HEK293 (cell line): ENCODE measurements at regions of chr1 and their contacts with region 1.

Region 1: GRCh38 chr1:156065212-156065611 is 4.3 kb downstream of the RAB25 start:
- H3K4me3 ChIP-seq: no peak overlapping the region
- H3K27ac ChIP-seq: no peak overlapping the region
- H3K4me1 ChIP-seq: peaks cover 4% of the 10 kb centered on the region; the same call in 1 of the 2 replicates
- CTCF ChIP-seq: no peak

Region 2: DNA sequence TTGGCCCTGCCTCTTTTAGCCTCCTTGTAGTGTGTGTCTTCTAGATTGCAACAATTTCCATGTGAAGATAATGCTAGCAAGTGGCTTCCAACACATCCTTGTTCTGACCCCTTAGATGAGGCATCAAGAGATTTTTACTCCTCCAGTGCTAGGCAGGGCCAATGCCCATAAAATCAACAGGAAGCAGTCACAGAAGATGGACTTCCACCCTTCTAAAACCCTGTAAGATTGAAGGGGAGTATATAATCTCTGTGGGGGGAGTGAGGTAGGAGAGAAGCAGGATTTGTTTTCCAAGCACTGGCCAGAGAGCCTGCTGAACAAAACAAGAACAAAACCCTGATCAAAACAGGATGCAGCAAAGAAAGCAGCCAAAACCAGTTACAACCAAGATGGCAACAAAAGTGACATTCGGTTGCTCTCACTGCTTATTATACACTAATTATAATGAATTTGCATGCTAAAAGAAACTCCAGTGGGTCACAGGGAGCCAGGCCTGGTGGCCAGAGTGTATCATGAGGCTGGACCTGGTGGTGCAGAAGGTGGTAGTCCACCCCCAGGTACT is 220.3 kb before region 1 on chr1:
- CTCF ChIA-PET with region 1: no interaction called
- POLR2A ChIA-PET with region 1: no interaction called
- H3K4me3 ChIP-seq: no peak overlapping the region
- H3K27ac ChIP-seq: no peak overlapping the region
- H3K4me1 ChIP-seq: no peaks in the 10 kb centered on the region
- CTCF ChIP-seq: no peak

Region 3: DNA sequence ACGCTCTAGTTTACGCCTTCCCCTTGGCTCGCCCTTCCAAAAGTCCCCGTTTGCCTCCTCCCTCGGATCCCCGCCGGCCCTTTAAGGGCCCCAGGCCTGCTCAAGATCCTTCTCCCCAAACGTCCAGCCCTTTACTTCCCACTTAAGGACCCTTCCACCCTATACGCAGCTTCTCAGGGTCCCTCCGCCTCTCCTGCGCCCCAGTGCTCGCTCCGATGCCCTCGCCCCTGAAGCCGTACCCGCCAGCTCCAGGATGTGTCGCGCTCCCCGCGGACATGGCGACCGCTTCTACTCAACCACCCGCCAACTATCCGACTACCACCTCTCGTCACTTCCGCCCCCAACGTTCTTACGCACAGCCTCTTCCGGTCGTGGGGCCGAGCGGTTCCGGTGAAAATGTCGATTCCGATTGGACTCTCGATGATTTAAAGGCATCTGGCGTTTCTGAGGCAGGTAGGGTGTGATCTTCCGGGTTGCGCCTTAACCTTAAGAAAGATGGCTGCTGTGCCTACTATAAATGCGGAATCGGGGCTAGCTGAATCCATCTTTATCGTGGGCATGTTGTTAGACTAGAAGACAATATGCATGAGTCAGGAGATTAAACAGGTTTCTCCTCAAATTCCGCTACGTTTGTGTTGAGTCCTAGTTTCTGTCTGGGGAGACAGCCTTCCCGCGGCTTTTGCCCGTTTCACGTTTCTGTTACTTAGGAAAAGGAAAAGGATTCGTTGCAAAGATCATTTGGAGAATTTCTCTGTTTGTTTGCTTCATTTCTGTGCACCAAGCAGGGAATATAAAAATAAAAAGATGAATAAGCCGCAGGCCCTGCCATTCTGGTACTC is 130.9 kb before region 1 on chr1 and contains the start of gene KHDC4:
- CTCF ChIA-PET with region 1: interaction called, 65 read pairs
- POLR2A ChIA-PET with region 1: interaction called, 4 read pairs
- H3K4me3 ChIP-seq: peak within 1 kb of the TSS; percentile 94
- H3K27ac ChIP-seq: peak within 1 kb of the TSS; percentile 81
- H3K4me1 ChIP-seq: no peaks in the 10 kb centered on the region; the same call in none of the 2 replicates
- CTCF ChIP-seq: peak; percentile 17; the same call in 1 of the 2 replicates

Region 4: DNA sequence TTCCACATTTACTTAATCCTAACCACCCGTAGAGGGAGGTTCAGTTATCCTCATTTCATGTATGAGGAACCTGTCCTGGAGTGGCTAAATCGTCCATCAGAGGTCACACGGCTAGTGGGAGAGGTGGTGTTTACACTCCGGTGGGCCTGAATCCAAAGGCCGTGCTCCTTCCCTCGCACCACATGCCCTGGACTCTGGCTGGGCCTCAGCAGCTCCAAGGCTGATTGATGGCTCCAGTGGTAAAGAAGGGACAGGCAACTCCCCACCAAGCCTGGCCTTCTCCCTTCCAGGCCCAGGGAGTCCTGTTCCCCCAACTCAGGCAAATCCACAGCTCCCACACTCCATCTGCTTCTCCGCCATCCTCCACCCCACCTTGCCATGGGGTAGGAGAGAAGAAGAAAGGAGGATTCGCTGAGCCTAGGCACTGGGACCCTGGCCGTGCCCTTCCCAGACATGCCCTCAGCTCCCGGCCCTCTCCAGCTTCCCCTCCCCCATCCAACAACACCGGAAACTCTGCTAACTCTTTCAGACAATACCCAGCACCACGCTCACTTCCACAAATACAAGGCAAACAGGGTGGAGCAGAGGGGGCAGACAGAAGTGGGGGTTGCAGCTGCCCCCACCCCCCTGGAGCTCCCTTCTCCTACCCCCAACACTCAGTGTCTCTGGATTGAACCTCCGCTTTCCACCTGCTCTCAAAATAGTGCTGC is 97.7 kb before region 1 on chr1:
- CTCF ChIA-PET with region 1: interaction called, 11 read pairs
- POLR2A ChIA-PET with region 1: interaction called, 3 read pairs
- H3K4me3 ChIP-seq: no peak overlapping the region
- H3K27ac ChIP-seq: 0 out of 2 replicates have a peak overlapping the region, but pooled peaks have one; percentile 9
- H3K4me1 ChIP-seq: no peaks in the 10 kb centered on the region; the same call in 1 of the 2 replicates
- CTCF ChIP-seq: no peak

Region 5: GRCh38 chr1:155978325-155978972 is 86.8 kb before region 1 on chr1 and contains the start of gene ARHGEF2:
- CTCF ChIA-PET with region 1: interaction called, 18 read pairs
- POLR2A ChIA-PET with region 1: no interaction called
- H3K4me3 ChIP-seq: peak within 1 kb of the TSS; percentile 91
- H3K27ac ChIP-seq: peak within 1 kb of the TSS; percentile 97
- H3K4me1 ChIP-seq: peaks cover 36% of the 10 kb centered on the region
- CTCF ChIP-seq: peak; percentile 68; the same call in 1 of the 2 replicates

Region 6: GRCh38 chr1:156025877-156026276 is 39.3 kb before region 1 on chr1:
- CTCF ChIA-PET with region 1: interaction called, 12 read pairs
- POLR2A ChIA-PET with region 1: no interaction called
- H3K4me3 ChIP-seq: no peak overlapping the region
- H3K27ac ChIP-seq: no peak overlapping the region
- H3K4me1 ChIP-seq: no peaks in the 10 kb centered on the region
- CTCF ChIP-seq: peak; percentile 86

Region 7: DNA sequence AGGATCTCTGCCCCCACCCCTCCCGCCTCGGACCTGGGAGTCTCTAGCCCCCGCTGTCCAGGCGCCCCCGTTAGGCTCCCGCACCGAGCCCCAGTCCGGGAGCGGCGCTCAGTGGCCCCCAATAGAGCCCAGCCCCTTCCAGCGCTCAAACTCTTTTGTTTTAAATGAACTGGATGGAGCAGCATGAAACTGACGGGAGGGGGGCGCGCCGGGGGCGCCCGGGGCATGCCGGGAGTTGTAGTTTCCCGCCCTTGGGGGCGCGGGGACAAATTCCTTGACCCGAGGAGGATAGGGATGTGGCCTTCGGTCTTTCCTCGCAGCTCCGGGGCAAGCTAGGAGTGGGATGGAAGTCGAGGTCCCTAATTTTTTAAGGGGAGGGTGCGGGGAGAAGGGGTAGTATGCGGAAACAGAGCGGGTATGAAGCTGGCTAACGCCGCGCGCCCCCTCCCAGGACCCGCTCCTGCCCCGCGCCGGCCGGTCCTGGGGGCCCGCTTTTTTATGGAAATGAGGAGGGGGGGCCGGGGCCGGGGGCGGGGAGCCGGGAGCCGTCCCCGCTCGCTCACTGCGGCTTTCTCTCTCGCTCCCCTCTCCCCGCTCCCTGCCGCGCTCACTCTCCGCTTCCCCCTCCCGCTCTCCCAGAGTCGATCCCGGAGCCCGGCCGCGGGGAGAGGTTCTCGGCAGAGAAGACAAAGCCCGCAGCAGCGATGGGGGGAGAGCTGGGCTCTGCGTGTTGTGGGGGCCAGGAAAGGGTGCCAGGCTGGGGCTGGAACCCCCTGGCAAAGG is 17.3 kb after region 1 on chr1 and contains the start of gene MEX3A:
- CTCF ChIA-PET with region 1: interaction called, 13 read pairs
- POLR2A ChIA-PET with region 1: no interaction called
- H3K4me3 ChIP-seq: peak within 1 kb of the TSS; percentile 77
- H3K27ac ChIP-seq: peak within 1 kb of the TSS; percentile 64
- H3K4me1 ChIP-seq: peaks cover 3% of the 10 kb centered on the region; the same call in 1 of the 2 replicates
- CTCF ChIP-seq: no peak; the same call in 1 of the 2 replicates

Region 8: DNA sequence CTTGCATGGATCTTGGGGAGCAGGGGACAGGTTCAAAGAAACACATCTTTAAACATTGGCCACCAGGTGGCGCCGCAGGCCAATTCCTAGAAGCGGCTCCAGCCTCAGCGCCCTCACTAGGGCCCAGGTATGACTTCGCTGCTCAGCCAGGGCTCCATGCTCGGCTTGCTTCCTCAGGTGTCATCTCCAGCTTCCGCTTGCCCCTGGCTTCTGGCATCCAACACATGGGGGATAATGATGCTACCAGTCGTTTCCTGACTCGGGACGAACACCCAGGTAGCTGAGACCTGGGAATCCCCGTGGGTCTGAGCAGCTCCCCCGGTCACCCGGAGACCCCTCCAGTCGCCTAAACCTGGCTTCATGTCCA is 25.6 kb after region 1 on chr1:
- CTCF ChIA-PET with region 1: interaction called, 11 read pairs
- POLR2A ChIA-PET with region 1: no interaction called
- H3K4me3 ChIP-seq: no peak overlapping the region
- H3K27ac ChIP-seq: no peak overlapping the region
- H3K4me1 ChIP-seq: no peaks in the 10 kb centered on the region
- CTCF ChIP-seq: peak; percentile 93